ENCODE measurements at regions of chr12 and their contacts with region 1.

Region 1: GRCh38 chr12:105330283-105330930 is at the start of gene C12orf75:
- DNase-seq: peak; percentile 93
- H3K4me3 Mint-ChIP-seq: peak within 1 kb of the TSS; percentile 74
- H3K27ac Mint-ChIP-seq: peak within 1 kb of the TSS; percentile 74
- H3K4me1 Mint-ChIP-seq: peaks cover 39% of the 10 kb centered on the region
- H3K27me3 Mint-ChIP-seq: no peaks in the 10 kb centered on the region
- total RNA-seq, gene C12orf75: 73.7 to 79.7 TPM

Region 2: GRCh38 chr12:105235732-105236476 is 94.5 kb before region 1 on chr12 and contains the start of gene APPL2:
- CTCF ChIA-PET with region 1: no interaction called
- POLR2A ChIA-PET with region 1: no interaction called
- intact Hi-C with region 1: loop called (anchors 2 kb)
- DNase-seq: peak; percentile 86
- H3K4me3 Mint-ChIP-seq: peak within 1 kb of the TSS; percentile 88
- H3K27ac Mint-ChIP-seq: peak within 1 kb of the TSS; percentile 85
- H3K4me1 Mint-ChIP-seq: peaks cover 37% of the 10 kb centered on the region
- H3K27me3 Mint-ChIP-seq: no peaks in the 10 kb centered on the region
- total RNA-seq, gene APPL2: 21.4 to 21.5 TPM

Region 3: DNA sequence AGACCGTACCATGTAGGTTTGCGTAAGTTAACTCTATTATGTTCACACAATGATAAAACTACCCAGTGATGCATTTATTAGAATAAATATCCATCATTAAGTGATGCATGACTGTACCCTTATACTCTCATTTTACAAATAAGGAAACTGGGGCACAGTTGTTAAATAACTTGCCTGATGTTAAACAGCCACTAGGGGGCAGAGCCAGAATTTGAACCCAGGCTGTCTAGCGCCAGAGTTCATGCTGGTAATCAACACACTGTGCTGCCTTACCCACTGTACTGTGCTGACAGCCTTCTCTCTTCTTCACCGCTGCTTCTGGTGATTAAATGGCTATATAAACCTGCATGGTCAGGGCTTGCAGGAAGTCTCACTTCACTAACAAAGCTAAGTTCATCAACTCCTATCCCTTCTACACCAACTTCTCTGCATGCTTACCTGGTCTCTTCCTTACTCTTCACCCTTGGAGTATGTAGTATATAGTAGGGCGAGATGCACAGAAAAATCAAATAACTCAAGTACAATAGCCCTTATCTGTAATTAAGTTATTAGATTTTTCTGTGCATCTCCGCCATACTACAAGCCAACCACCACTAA is 50.8 kb before region 1 on chr12:
- CTCF ChIA-PET with region 1: no interaction called
- POLR2A ChIA-PET with region 1: no interaction called
- intact Hi-C with region 1: loop called (anchors 1 kb)
- DNase-seq: peak; percentile 55
- H3K4me3 Mint-ChIP-seq: no peak overlapping the region
- H3K27ac Mint-ChIP-seq: no peak overlapping the region
- H3K4me1 Mint-ChIP-seq: no peaks in the 10 kb centered on the region
- H3K27me3 Mint-ChIP-seq: peaks cover 6% of the 10 kb centered on the region

Region 4: DNA sequence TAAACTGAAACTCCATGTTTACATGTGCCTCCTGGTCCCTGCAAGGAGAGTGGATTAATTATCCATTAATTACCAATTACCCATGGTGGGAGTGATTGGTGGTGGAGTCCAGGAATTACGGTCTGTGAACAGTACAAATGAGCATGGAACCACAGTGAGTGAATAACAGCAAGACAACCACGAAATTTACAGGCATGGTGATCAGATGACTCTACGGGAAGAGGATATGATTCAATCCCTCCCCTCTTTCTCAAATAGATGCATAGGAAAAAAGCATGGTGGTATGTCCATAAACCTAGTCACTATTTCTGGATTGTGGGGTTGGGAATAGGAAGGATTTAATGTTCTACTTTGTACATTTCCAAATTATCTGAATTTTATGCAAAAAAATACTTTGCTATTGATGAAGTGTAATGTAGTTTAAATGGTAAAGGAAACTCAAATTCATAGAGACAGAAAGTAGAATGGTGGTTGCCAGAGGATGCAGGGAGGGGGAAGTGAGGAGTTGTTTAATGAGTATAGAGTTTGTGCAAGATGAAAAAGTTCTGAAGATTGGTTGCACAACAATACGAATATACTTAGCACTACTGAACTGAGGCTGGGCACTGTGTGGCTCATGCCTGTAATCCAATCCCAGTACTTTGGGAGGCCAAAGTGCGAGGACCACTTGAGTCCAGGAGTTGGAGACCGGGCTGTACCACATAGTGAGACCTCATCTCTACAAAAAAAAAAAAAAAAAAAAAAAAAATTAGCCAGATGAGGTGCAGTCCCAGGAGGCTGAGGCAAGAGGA is 41.1 kb before region 1 on chr12:
- CTCF ChIA-PET with region 1: no interaction called
- POLR2A ChIA-PET with region 1: no interaction called
- intact Hi-C with region 1: loop called (anchors 2 kb)
- DNase-seq: peak; percentile 10
- H3K4me3 Mint-ChIP-seq: no peak overlapping the region
- H3K27ac Mint-ChIP-seq: no peak overlapping the region
- H3K4me1 Mint-ChIP-seq: no peaks in the 10 kb centered on the region
- H3K27me3 Mint-ChIP-seq: peaks cover 6% of the 10 kb centered on the region

Region 5: DNA sequence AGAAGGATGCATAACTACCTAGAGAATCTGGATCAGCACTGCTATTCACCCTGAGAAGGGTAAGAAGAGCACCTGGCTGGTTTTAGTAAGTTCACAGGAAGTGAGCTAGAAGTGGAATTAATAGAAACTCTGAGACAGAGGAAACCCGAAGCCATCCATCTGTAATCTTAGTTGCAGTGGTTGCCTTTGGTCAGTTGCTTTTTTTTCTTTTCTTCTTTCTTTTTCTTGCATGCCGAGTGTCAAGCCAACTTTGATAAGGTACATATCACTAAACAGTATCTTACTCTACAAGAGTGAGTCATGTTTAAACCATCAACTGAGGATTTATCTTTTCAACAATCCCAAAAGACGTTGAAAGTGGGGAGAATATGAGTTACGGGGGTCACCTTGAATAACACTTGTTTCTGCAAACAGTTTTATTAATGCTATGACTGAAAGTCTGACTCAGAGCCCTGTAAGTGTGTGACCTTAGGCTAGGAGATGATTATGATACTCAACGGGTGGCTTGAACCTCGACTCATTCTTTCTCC is 26.8 kb after region 1 on chr12:
- CTCF ChIA-PET with region 1: no interaction called
- POLR2A ChIA-PET with region 1: no interaction called
- intact Hi-C with region 1: loop called (anchors 1 kb)
- DNase-seq: no peak
- H3K4me3 Mint-ChIP-seq: no peak overlapping the region
- H3K27ac Mint-ChIP-seq: peak overlapping the region; percentile 57
- H3K4me1 Mint-ChIP-seq: peaks cover 11% of the 10 kb centered on the region
- H3K27me3 Mint-ChIP-seq: no peaks in the 10 kb centered on the region

Measured in activated CD4-positive, alpha-beta memory T cell treated with anti-CD3 and anti-CD28 coated beads for 36 hours (primary cell).